Right lobe of liver (tissue), 6 donors: ENCODE measurements at regions of chr20 and their contacts with region 1.

Region 1: DNA sequence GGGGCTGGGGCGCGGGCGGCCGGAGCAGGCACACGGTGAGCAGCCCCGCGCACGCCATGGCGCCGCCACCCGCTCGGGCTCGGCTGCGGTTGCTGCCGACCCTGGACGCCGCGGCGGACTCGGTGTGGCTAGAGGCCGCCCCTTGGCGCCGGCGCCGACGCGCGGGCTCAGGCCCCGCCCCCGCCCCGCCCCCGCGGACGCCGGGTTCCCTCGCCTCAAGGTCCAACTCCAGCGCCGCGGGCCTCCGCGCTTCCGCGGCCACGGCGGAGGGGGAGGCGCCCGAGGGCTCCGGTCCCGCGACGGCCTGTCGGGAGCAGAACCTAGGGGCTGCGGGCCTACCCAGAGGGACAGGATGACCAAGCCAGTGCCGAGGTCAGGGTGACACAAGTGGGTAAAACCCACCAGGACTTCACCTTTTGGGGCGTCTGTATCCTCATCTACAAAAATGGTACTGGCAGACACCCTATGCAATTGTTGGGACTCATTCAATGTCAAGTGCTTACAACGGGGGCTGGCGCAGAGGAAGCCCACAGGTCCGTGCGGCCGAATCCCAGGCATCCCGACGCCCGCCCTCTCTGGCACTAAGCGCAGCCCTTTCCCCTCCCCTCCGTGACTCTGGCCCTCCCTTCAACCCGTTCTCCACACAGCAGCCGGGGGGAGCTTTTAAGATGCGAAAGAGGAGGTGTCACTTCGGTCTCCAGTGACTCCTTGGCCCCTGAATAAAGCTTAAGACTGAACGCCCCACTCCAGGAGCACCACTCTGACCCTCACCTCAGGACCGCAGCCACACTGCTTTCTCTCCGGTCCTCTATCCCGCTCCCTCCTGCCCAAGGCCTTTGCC is at the start of gene NECAB3:
- DNase-seq: peak; percentile 87 to 90 (median 89)
- ATAC-seq: peak; percentile 88 to 96 (median 90)
- H3K4me3 ChIP-seq: peak within 1 kb of the TSS; percentile 55 to 79 (median 70)
- H3K27ac ChIP-seq: peak within 1 kb of the TSS; percentile 41 to 75 (median 51)
- H3K4me1 ChIP-seq: peaks cover 0 to 11% (median 0%) of the 10 kb centered on the region in 4 donors
- H3K27me3 ChIP-seq: no peaks in the 10 kb centered on the region
- CTCF ChIP-seq: peak in 1 of 4 donors; percentile 13
- POLR2A ChIP-seq: peak; percentile 76
- total RNA-seq, gene NECAB3: 13.2 to 21.9 (median 19.2) TPM

Region 2: DNA sequence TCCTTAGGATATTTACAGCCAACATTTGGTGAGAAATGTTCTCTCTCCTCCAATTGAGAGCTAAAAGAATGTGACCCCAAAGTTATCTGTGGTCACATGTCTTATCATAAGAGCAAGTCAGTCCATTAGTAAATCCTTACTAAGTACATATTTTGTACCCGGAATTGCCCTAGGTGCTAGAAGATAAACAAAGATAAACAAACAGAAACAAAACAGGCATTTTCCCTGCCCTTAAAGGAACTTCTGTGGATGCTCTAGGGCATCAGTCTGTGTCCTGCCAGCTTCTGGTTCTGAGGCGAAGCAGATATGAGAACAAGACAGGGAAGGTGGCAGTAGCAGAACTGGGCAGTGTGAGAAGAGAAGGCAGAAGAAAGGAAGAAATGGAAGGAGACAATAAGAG is 315.1 kb before region 1 on chr20:
- intact Hi-C with region 1: no loop called
- DNase-seq: no peak
- ATAC-seq: peak in 1 of 4 donors; percentile 39
- H3K4me3 ChIP-seq: no peak overlapping the region
- H3K27ac ChIP-seq: no peak overlapping the region
- H3K4me1 ChIP-seq: no peaks in the 10 kb centered on the region
- H3K27me3 ChIP-seq: no peaks in the 10 kb centered on the region
- CTCF ChIP-seq: no peak
- POLR2A ChIP-seq: no peak

Region 3: DNA sequence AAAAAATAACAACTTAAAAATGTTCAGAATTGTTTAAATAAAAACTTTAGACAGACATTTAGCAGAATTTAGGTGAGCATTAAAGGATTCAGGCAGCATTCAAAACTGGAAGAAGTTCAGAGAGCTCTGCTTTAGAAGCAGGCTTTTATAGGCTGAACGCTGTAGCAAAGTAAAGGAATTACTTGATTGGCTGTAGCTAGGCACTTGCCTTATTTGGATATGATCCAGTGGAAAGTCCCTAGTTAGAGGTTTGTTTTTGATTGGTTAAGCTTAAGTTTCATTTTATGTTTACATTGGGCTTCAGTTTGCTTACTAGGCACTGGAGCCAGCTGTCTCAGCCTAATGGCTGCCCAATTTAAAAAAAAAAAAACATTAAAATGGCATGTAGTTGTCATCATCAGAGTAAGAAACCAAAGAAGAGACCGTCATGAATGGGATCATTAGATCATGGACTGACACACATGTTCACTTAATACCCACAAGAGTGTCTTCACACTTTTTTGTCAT is 119.5 kb before region 1 on chr20:
- intact Hi-C with region 1: no loop called
- DNase-seq: no peak
- ATAC-seq: peak; percentile 85 to 94 (median 90)
- H3K4me3 ChIP-seq: no peak overlapping the region
- H3K27ac ChIP-seq: peak overlapping the region; percentile 27 to 85 (median 82)
- H3K4me1 ChIP-seq: peaks cover 0 to 31% (median 10%) of the 10 kb centered on the region in 4 donors
- H3K27me3 ChIP-seq: no peaks in the 10 kb centered on the region
- CTCF ChIP-seq: no peak
- POLR2A ChIP-seq: peak; percentile 43

Region 4: GRCh38 chr20:33719989-33720709 is 45.6 kb after region 1 on chr20 and contains the start of gene PXMP4:
- intact Hi-C with region 1: loop called in 1 of 2 experiments (anchors 10 kb)
- DNase-seq: peak; percentile 82 to 91 (median 89)
- ATAC-seq: peak; percentile 92 to 96 (median 94)
- H3K4me3 ChIP-seq: peak within 1 kb of the TSS; percentile 65 to 81 (median 75)
- H3K27ac ChIP-seq: peak within 1 kb of the TSS; percentile 27 to 83 (median 31)
- H3K4me1 ChIP-seq: peaks cover 0 to 28% (median 3%) of the 10 kb centered on the region in 4 donors
- H3K27me3 ChIP-seq: no peaks in the 10 kb centered on the region
- CTCF ChIP-seq: no peak
- POLR2A ChIP-seq: peak; percentile 52
- total RNA-seq, gene PXMP4: 5.5 to 17.8 (median 12.9) TPM

Region 5: DNA sequence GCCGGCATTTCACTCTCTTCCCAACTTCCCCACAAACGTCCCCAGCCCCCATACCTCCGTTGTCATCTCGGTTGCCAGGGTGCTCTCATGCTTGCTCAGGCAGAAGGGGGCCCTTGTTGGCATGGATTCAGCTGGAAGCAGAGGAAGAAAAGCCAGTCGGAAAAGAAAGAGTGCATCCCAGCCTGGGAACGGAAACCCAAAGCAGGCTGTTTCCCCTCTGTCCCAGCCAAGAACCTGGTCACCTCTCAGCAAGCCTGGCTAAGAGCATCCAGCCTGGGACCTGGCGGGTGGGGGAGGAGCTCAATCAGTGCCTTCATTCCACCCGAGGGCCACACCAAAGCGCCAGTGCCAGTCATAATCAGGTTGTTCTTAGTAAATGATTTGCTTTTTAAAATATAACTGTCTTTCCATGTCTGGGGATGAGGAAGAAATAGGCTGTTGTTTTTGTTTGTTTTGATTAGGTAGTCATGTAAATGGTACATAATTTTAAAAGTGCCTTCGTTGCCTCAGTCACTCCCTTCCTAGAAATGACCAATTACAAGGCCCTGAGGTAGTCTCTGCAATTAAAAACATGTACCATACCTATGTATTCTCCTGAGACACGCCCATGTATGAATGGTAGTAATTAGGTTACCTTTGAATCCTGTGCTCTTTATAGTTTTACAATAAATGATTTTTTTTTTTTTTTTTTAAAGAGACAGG is 157.7 kb after region 1 on chr20:
- intact Hi-C with region 1: no loop called
- DNase-seq: no peak
- ATAC-seq: peak in 2 of 4 donors; percentile 10 to 20
- H3K4me3 ChIP-seq: no peak overlapping the region
- H3K27ac ChIP-seq: no peak overlapping the region
- H3K4me1 ChIP-seq: peaks cover 0 to 54% (median 17%) of the 10 kb centered on the region in 4 donors
- H3K27me3 ChIP-seq: no peaks in the 10 kb centered on the region
- CTCF ChIP-seq: no peak
- POLR2A ChIP-seq: no peak